HEK293T (cell line): ENCODE measurements at regions of chr17 and their contacts with region 1.

Region 1: GRCh38 chr17:66386498-66387365 is 84.3 kb downstream of the PRKCA start:
- DNase-seq: no peak

Region 2: GRCh38 chr17:66364990-66365490 is 21.7 kb before region 1 on chr17:
- CTCF ChIA-PET with region 1: no interaction called
- POLR2A ChIA-PET with region 1: no interaction called
- DNase-seq: no peak

Region 3: DNA sequence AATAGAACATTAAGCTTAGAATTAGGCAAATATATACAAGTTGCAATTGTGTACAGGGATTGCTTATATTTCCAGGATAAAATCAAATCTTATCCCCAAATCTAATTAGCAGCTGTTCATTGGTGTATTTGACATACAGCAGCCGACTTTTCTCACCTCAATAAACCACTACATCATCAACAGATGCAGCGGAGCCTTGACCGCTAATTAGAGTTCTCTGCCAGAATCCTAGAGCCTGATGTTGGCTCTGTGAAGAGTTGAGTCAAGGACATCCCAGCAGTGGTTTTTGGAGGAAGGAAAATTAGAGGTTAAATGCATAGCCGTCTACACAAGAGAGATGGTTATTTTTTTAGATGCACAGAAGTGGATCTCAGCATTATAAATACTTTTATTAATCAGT is 226.3 kb after region 1 on chr17:
- CTCF ChIA-PET with region 1: interaction called, 11 read pairs
- POLR2A ChIA-PET with region 1: no interaction called
- DNase-seq: no peak